ENCODE measurements at regions of chr14 and their contacts with region 1.

Region 1: GRCh38 chr14:68795597-68796417 is 2.9 kb upstream of the ZFP36L1 start:
- DNase-seq: peak; percentile 83
- ATAC-seq: peak; percentile 41
- H3K4me3 Mint-ChIP-seq: peak overlapping the region; percentile 100
- H3K27ac Mint-ChIP-seq: peak overlapping the region; percentile 99
- H3K4me1 Mint-ChIP-seq: peaks cover 48% of the 10 kb centered on the region
- H3K27me3 Mint-ChIP-seq: no peaks in the 10 kb centered on the region
- CTCF ChIP-seq: no peak

Region 2: GRCh38 chr14:67816326-67817002 is 979.3 kb before region 1 on chr14 and contains the start of gene ZFYVE26:
- CTCF ChIA-PET with region 1: no interaction called
- POLR2A ChIA-PET with region 1: interaction called, 7 read pairs
- intact Hi-C with region 1: loop called (anchors 2 kb)
- DNase-seq: peak; percentile 70
- ATAC-seq: peak; percentile 85
- H3K4me3 Mint-ChIP-seq: peak within 1 kb of the TSS; percentile 94
- H3K27ac Mint-ChIP-seq: peak within 1 kb of the TSS; percentile 95
- H3K4me1 Mint-ChIP-seq: peaks cover 63% of the 10 kb centered on the region
- H3K27me3 Mint-ChIP-seq: no peaks in the 10 kb centered on the region
- CTCF ChIP-seq: no peak
- total RNA-seq, gene ZFYVE26: 40.7 and 41.1 TPM in 2 replicates

Region 3: DNA sequence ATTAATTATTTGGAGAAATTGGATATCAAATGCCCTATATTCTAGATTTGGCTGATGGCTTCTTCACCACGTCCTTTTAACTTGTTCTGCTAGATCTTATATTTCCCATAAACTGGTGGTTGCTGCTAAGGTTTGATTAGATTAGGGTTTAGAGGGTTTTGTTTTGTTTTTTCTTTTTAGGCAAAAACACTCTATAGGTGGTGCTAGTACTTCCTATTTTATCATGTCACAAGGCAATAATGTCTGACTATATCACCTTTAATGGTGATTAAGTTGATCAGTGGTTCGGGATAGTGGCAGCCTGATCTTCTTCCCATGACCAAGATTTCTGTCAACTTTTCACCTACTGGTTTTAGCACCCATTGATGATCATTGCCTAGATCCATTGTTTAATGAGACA is 521.1 kb before region 1 on chr14:
- CTCF ChIA-PET with region 1: no interaction called
- POLR2A ChIA-PET with region 1: interaction called, 413 read pairs
- intact Hi-C with region 1: loop called (anchors 2 kb)
- DNase-seq: no peak
- ATAC-seq: no peak
- H3K4me3 Mint-ChIP-seq: peak overlapping the region; percentile 65
- H3K27ac Mint-ChIP-seq: peak overlapping the region; percentile 99
- H3K4me1 Mint-ChIP-seq: peaks cover 93% of the 10 kb centered on the region
- H3K27me3 Mint-ChIP-seq: no peaks in the 10 kb centered on the region
- CTCF ChIP-seq: no peak

Region 4: GRCh38 chr14:68349900-68350629 is 445.7 kb before region 1 on chr14:
- CTCF ChIA-PET with region 1: no interaction called
- POLR2A ChIA-PET with region 1: interaction called, 16 read pairs
- intact Hi-C with region 1: no loop called
- DNase-seq: no peak
- ATAC-seq: no peak
- H3K4me3 Mint-ChIP-seq: no peak overlapping the region
- H3K27ac Mint-ChIP-seq: no peak overlapping the region
- H3K4me1 Mint-ChIP-seq: peaks cover 31% of the 10 kb centered on the region
- H3K27me3 Mint-ChIP-seq: no peaks in the 10 kb centered on the region
- CTCF ChIP-seq: no peak

Region 5: DNA sequence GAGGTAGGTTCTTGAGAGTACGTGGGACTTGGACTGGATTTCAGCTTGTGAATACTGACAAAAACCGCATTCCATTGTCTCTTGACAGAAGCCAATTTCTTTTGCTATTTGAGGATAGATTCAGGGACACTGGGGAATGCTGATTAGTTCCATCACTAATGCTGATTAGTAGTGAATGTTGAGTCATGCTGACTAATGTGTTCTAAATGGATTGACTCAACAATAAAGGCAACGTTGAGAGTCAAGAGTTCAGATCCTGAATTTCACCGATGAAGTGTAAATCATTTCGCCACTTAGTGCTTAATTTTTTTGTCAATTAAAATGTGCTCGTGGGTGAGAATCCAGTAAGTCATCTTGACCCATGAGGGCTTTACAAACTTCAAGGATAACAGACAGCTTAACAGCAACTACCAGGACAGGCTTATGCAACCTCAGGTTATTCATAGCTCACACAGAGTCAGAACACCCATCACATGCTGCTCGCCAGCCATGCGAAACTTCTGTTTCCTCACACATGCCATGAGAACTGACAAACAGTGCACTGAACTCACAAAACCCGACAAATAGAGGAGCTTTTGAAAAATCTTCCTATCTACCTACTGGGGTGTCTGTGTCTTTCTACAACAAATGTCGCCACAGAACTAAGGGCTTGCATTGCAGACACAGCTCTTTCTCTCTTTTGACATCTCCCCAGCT is 319.4 kb before region 1 on chr14:
- CTCF ChIA-PET with region 1: no interaction called
- POLR2A ChIA-PET with region 1: interaction called, 63 read pairs
- intact Hi-C with region 1: loop called (anchors 2 kb)
- DNase-seq: peak; percentile 40
- ATAC-seq: peak; percentile 83
- H3K4me3 Mint-ChIP-seq: peak overlapping the region; percentile 62
- H3K27ac Mint-ChIP-seq: peak overlapping the region; percentile 99
- H3K4me1 Mint-ChIP-seq: peaks cover 89% of the 10 kb centered on the region
- H3K27me3 Mint-ChIP-seq: no peaks in the 10 kb centered on the region
- CTCF ChIP-seq: no peak

Region 6: DNA sequence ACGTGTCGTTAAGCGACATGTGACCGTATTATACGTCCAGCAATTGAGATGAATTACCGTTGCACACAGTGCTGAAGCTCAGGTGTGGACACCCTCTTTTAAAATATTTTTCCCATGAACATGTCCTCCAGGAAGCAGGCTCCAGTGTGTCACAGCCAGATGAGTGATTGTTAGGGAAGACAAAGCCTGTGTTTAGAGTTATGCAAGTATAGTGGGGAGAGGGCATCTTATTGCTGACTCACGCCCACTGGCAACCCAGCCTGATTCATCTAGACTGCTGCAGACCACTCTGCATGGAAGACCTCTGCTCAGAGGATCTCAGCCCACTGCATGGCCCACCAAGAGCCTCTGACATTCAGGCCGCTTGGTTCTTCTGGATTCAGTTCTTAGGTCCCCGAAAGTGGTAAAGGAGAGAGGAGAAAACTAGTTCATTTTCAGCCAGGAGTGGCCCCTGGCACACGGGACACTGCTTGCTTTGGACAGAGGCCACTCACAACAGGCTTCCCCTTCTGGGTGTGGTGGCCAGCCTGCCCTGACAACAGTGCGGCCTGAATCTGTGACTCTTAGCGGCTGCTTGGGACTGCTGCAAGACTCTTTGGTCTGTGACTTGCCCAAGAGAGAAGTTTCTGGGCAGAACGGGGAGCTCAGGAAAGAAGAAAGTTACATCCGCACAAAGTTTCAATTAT is 269.2 kb before region 1 on chr14:
- CTCF ChIA-PET with region 1: no interaction called
- POLR2A ChIA-PET with region 1: interaction called, 39 read pairs
- intact Hi-C with region 1: no loop called
- DNase-seq: no peak
- ATAC-seq: no peak
- H3K4me3 Mint-ChIP-seq: no peak overlapping the region
- H3K27ac Mint-ChIP-seq: peak overlapping the region; percentile 61
- H3K4me1 Mint-ChIP-seq: peaks cover 50% of the 10 kb centered on the region
- H3K27me3 Mint-ChIP-seq: no peaks in the 10 kb centered on the region
- CTCF ChIP-seq: no peak

Region 7: DNA sequence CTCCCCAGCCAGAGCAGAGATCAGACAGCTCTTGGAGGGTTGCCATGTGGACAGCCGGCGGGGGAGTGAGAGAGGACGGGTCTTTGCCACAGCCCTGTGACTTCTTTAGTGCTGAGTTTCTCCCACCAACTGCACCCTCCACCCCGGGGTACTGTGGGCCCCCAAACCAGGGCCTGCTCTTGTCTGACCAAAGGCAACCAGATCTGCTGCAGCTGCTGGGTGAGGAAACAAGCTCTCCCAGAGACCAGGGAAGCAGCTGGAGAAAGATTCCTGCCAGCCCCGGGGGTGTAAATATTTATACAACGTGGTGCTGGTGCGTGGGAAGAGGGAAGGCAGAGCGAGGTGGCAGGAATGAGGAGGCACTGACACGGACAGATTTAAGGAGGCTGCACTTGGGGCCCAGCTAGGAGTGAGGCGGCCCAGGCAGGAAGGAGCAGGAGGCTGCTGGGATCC is 11.4 kb after region 1 on chr14:
- CTCF ChIA-PET with region 1: interaction called, 67 read pairs
- POLR2A ChIA-PET with region 1: interaction called, 2,953 read pairs
- intact Hi-C with region 1: loop called (anchors 1 kb)
- DNase-seq: no peak
- ATAC-seq: no peak
- H3K4me3 Mint-ChIP-seq: peak overlapping the region; percentile 71
- H3K27ac Mint-ChIP-seq: peak overlapping the region; percentile 98
- H3K4me1 Mint-ChIP-seq: peaks cover 80% of the 10 kb centered on the region
- H3K27me3 Mint-ChIP-seq: no peaks in the 10 kb centered on the region
- CTCF ChIP-seq: no peak